ENCODE measurements at regions of chr9 and their contacts with region 1.

Region 1: DNA sequence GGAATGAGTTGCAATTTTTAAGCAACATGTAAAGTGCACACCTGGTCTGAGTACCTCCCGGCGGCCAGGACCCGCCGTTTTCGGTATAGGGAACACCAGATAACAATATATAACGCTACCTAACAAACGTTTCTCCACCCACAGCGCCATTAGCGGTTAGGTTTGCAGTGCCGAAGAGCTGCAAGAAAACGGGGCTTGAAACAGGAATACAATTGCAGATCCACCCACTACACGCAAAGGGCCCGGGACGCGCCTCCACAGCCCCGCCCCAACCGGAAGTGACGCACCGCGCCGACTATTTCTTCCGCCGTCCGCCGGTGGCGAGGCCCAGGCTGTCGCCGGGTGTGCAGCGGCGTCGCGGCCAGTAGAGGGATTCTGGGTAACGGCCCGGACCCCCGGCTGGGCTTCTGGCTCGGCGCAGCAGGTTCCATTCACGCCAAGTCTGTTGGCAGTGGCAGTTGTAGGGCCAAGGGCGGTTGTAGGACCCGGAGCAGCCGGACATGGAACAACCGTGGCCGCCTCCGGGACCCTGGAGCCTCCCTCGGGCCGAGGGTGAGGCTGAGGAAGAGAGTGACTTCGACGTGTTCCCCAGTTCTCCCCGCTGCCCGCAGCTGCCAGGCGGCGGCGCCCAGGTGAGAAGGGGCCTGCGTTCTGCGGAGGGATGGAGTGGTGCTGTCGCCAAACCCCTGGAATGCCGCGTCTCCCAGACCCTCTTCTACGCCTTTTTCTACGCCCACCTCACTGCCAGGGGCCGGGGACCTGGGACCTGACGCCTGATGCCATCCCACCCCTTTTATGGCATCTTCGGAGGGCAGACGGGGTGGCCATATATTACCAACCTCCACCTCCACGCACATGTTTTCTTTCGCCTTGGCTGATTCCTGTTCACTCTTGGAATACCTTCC is at the start of gene CDC37L1:
- DNase-seq: peak; percentile 91 to 97
- ATAC-seq: peak; percentile 90 to 94
- H3K4me3 ChIP-seq: peak within 1 kb of the TSS; percentile 59
- H3K27ac ChIP-seq: peak within 1 kb of the TSS; percentile 85 to 93
- H3K4me1 ChIP-seq: peaks cover 30% of the 10 kb centered on the region
- CTCF ChIP-seq: peak; percentile 21; the same call in 1 of the 3 replicates
- EP300 ChIP-seq: no peak
- POLR2A ChIP-seq: peak; percentile 94
- RAD21 ChIP-seq: peak in 1 of 2 experiments; percentile 37; a peak in 3 of 5 replicates
- polyA plus RNA-seq, gene CDC37L1: 10.4 and 16.2 TPM in 2 replicates

Region 2: DNA sequence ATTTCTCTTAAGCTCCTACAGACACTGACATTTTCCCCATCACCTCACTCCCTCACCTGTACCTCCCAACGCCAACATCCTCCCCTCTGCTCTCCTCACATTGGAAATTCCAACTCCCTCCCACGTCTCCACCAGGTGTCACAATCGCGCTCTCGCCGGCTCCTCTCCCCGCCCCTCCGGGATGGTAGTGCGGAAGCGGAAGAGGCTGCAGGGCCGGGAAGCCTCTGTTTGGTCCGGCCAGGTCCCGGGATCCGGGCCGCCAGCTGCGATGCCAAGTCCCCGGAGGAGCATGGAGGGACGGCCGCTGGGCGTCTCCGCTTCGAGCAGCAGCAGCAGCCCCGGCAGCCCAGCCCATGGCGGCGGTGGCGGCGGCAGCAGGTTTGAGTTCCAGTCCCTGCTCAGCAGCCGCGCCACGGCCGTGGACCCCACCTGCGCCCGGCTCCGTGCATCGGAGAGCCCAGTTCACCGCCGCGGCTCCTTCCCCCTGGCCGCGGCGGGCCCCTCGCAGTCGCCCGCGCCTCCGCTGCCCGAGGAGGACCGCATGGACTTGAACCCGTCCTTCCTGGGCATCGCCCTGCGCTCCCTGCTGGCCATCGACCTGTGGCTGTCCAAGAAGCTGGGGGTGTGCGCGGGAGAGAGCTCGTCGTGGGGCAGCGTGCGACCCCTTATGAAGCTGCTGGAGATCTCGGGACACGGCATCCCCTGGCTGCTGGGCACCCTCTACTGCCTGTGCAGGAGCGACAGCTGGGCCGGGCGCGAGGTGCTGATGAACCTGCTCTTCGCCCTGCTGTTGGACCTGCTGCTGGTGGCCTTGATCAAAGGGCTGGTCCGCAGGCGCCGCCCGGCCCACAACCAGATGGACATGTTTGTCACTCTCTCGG is 17.2 kb before region 1 on chr9 and contains the start of gene PLPP6:
- CTCF ChIA-PET with region 1: interaction called, 37 read pairs
- POLR2A ChIA-PET with region 1: interaction called, 37 read pairs
- DNase-seq: peak; percentile 89 to 91
- ATAC-seq: peak; percentile 95 to 96
- H3K4me3 ChIP-seq: peak within 1 kb of the TSS; percentile 84
- H3K27ac ChIP-seq: peak within 1 kb of the TSS; percentile 92 to 99
- H3K4me1 ChIP-seq: peaks cover 49% of the 10 kb centered on the region
- CTCF ChIP-seq: peak; percentile 58
- EP300 ChIP-seq: no peak
- POLR2A ChIP-seq: peak; percentile 82
- RAD21 ChIP-seq: peak; percentile 66 to 73
- polyA plus RNA-seq, gene PLPP6: 13.2 and 13.5 TPM in 2 replicates

Region 3: GRCh38 chr9:4721736-4722135 is 42.2 kb after region 1 on chr9:
- CTCF ChIA-PET with region 1: no interaction called
- POLR2A ChIA-PET with region 1: no interaction called
- DNase-seq: no peak
- ATAC-seq: no peak
- H3K4me3 ChIP-seq: no peak overlapping the region
- H3K27ac ChIP-seq: no peak overlapping the region
- H3K4me1 ChIP-seq: no peaks in the 10 kb centered on the region
- CTCF ChIP-seq: no peak
- EP300 ChIP-seq: no peak
- POLR2A ChIP-seq: no peak
- RAD21 ChIP-seq: no peak

Region 4: DNA sequence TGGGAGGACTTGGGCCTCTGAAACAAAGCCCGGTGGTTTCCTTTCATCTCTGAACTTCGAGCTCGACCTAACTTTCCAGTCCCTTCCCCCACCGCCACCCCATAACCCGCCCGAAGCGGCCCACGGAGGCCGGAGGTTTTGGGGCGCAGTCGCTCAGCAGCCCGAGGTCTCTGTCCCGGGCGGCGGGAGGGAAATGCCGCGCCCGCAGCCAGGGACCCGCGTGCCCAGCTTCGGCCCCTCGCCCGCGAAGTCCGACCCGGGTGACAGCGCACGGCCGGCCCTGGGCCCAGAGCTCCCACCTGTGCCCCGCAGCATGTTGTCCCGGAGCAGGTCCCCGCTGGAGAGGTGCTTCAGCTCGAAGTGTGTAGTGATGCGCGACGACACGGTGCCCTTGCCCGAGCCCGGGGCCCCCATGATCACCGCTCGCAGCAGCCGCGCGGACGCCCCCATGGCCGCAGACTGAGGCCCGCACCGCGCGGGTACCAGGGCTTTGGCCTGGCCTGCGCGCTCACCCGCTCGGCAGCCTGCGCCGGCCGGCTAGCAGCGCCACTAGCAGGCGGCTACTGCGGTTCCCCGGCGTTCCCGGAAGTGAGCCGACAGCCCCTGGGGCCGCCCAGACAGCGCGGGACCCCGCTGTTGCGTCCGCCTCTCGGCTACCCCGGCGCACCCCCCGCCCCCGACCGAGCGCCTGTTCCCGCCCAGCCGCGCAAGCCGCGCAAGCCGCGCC is 61.3 kb after region 1 on chr9 and contains the start of gene AK3:
- CTCF ChIA-PET with region 1: interaction called, 8 read pairs
- POLR2A ChIA-PET with region 1: interaction called, 12 read pairs
- DNase-seq: peak; percentile 87 to 89
- ATAC-seq: peak; percentile 92 to 95
- H3K4me3 ChIP-seq: peak within 1 kb of the TSS; percentile 88
- H3K27ac ChIP-seq: peak within 1 kb of the TSS; percentile 88 to 92
- H3K4me1 ChIP-seq: peaks cover 24% of the 10 kb centered on the region
- CTCF ChIP-seq: peak; percentile 29; the same call in 2 of the 3 replicates
- EP300 ChIP-seq: no peak
- POLR2A ChIP-seq: peak; percentile 89
- RAD21 ChIP-seq: peak; percentile 21 to 52; a peak in 3 of 5 replicates
- polyA plus RNA-seq, gene AK3: 70.4 and 83.0 TPM in 2 replicates

Measured in A549 (cell line).